Gastrocnemius medialis (tissue), 4 donors: ENCODE measurements at regions of chr4 and their contacts with region 1.

Region 1: DNA sequence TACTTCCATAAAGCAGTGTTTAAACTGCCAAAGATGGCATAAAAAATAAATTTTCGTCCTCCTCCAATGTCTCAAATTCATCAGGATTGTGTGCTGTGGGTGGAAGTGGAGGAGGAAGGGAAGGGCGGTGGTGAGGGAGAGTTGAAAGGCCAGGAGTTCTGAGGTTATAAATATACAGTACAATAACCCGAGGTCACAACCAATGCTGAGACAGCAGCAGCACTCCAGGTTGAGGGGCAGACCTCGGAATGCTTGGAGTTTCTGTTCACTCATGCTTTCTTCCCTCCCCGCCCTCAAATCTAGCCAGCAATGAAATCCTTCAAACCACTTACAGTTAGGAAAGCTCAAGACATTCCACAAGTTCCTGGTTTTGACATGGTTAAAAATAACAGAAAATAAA is 134.0 kb upstream of the SMAD1 start:
- DNase-seq: no peak
- ATAC-seq: no peak
- H3K4me3 ChIP-seq: no peak overlapping the region
- H3K27ac ChIP-seq: no peak overlapping the region
- H3K4me1 ChIP-seq: peaks cover 15 to 26% of the 10 kb centered on the region in 2 donors
- H3K27me3 ChIP-seq: no peaks in the 10 kb centered on the region
- CTCF ChIP-seq: no peak
- POLR2A ChIP-seq: no peak

Region 2: GRCh38 chr4:145001635-145002034 is 346.0 kb before region 1 on chr4:
- in situ Hi-C with region 1: no loop called
- intact Hi-C with region 1: no loop called
- DNase-seq: no peak
- ATAC-seq: no peak
- H3K4me3 ChIP-seq: no peak overlapping the region
- H3K27ac ChIP-seq: no peak overlapping the region
- H3K4me1 ChIP-seq: peaks cover 0 to 4% of the 10 kb centered on the region in 2 donors
- H3K27me3 ChIP-seq: no peaks in the 10 kb centered on the region
- CTCF ChIP-seq: no peak
- POLR2A ChIP-seq: no peak

Region 3: DNA sequence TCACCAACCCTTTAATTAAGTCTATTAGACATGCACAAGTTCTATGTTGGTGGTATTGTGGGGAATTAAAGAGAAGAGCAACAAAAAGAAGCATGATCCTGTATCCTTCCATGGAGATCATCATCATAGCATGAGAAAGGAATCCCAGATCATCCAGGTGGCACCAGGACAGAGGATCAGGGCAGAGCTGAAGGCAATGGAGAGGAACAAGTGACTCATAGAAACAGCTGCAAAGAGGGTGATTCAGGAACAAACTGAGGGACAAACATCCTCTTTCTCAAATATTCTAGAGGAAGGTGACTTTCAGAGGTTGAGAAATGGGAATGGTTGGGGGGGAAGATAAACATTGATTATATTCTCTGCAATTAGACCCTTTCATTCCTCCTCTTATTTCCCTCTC is 61.8 kb before region 1 on chr4:
- in situ Hi-C with region 1: loop called in 1 of 4 experiments (anchors 10 kb)
- intact Hi-C with region 1: no loop called
- DNase-seq: no peak
- ATAC-seq: peak in 1 of 2 donors; percentile 21
- H3K4me3 ChIP-seq: no peak overlapping the region
- H3K27ac ChIP-seq: no peak overlapping the region
- H3K4me1 ChIP-seq: peaks cover 13 to 17% of the 10 kb centered on the region in 2 donors
- H3K27me3 ChIP-seq: no peaks in the 10 kb centered on the region
- CTCF ChIP-seq: no peak
- POLR2A ChIP-seq: no peak